Activated CD4-positive, alpha-beta T cell treated with anti-CD3 and anti-CD28 coated beads, Interleukin-2, amount 10 ng/mL, durations not matched to agents 24 days and 14 days (primary cell): ENCODE measurements at regions of chr1 and their contacts with region 1.

Region 1: DNA sequence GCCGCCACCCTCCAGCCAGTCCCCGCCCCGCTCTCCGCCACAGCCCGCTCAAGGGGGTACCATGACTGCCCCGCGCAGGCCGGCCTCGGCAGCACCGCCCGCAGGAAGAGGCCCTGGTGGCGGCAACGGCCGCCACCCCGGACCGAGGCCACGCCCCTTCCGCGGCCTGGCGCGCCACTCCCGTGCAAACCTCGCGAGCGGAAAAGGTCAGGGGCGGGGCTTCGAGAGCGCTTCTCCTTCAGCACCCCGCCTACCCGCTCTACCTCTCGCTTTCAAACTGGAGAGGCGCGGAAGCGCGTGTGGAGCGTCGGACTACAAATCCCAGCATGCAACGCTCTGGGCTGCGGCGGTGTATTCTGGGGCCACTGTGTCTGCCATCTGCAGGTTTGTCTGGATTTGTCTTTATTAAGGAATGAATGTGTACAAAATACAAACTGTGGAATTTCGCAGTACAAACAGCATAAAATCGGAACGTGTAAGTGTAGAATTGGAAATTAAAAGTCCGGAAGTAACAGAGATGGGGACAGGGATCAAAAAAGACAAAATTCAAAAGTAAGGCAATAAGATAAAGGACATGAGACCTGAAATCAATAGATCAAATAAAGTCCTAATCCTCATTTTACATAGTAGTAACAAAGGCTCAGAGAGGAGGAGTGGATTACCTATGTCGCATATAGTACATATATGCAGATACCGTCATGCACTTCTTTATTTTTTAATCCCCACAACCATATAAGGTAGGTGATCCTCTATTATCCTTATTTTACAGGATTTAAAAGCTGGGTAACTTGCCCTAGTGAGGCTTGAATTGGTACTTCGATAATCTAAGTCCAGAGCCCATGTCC is 464 bp upstream of the ADSS2 start:
- DNase-seq: peak; percentile 100
- H3K4me3 Mint-ChIP-seq: peak overlapping the region; percentile 92
- H3K27ac Mint-ChIP-seq: peak overlapping the region; percentile 96
- H3K4me1 Mint-ChIP-seq: peaks cover 29% of the 10 kb centered on the region
- H3K27me3 Mint-ChIP-seq: no peaks in the 10 kb centered on the region

Region 2: DNA sequence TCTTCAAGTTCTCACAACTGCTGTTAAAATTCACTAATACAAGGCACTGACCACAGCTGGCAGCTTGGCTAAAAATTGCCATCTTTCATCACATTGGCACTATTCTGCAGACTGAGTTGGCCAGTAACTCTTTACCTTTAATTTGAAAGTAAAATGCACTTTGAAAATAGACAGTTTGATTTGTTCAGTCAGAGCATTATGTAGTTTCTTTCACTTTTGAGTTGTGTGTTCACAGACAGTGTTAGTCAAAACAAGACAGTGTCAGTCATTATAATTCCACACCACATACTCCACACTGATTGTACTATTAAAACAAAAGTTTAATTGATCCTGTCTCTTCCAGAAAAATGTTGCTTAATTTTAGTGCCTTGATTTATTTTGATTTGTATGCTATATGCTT is 1035.7 kb before region 1 on chr1:
- intact Hi-C with region 1: loop called (anchors 1 kb)
- DNase-seq: no peak
- H3K4me3 Mint-ChIP-seq: peak overlapping the region; percentile 68
- H3K27ac Mint-ChIP-seq: peak overlapping the region; percentile 72
- H3K4me1 Mint-ChIP-seq: peaks cover 51% of the 10 kb centered on the region
- H3K27me3 Mint-ChIP-seq: no peaks in the 10 kb centered on the region

Region 3: DNA sequence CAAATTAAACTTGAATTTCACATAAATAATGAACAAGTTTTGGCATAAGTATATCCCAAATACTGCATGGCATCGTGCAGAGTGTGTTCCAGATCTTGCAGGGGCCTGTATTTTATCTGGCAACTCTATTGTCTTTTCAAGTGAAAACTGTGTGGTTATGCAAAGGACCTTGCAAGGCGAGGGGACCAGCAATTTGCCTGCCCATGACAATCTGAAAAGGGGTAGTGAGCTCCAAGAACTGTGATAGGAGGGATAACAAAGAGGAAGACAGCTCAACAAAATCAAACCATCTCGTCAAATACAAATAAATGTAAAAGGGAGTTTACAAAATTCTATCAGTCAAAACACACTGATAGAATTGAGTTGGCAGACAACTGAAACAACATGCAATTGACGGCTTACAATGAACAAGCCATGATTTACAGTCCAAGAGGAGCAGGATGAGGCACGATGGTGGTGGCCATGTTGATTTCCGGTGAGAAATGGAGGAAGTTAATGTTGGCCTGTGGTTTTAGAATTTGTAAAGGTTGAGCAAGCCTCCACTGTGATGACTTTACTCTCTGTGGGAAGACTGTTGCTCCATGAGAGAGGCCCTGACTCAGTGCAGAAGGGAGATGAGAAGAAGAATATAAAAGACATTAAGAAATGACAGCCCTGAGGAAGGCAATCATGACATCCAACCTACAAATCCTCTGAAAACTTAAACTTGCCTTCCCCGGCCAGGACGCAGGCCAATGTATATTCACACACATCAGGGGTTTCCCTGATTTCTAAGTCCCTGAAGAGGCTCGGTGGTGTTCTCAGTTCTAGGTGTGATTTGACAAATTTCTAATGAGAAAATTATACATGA is 132.7 kb before region 1 on chr1:
- intact Hi-C with region 1: loop called (anchors 1 kb)
- DNase-seq: peak; percentile 85
- H3K4me3 Mint-ChIP-seq: peak overlapping the region; percentile 60
- H3K27ac Mint-ChIP-seq: peak overlapping the region; percentile 84
- H3K4me1 Mint-ChIP-seq: peaks cover 43% of the 10 kb centered on the region
- H3K27me3 Mint-ChIP-seq: no peaks in the 10 kb centered on the region

Region 4: GRCh38 chr1:244435562-244436205 is 16.5 kb before region 1 on chr1:
- intact Hi-C with region 1: loop called (anchors 1 kb)
- DNase-seq: peak; percentile 59
- H3K4me3 Mint-ChIP-seq: peak overlapping the region; percentile 63
- H3K27ac Mint-ChIP-seq: peak overlapping the region; percentile 99
- H3K4me1 Mint-ChIP-seq: peaks cover 36% of the 10 kb centered on the region
- H3K27me3 Mint-ChIP-seq: no peaks in the 10 kb centered on the region

Region 5: GRCh38 chr1:244713332-244713731 is 261.2 kb after region 1 on chr1:
- intact Hi-C with region 1: no loop called
- DNase-seq: no peak
- H3K4me3 Mint-ChIP-seq: no peak overlapping the region
- H3K27ac Mint-ChIP-seq: no peak overlapping the region
- H3K4me1 Mint-ChIP-seq: peaks cover 8% of the 10 kb centered on the region
- H3K27me3 Mint-ChIP-seq: peaks cover 3% of the 10 kb centered on the region

Region 6: DNA sequence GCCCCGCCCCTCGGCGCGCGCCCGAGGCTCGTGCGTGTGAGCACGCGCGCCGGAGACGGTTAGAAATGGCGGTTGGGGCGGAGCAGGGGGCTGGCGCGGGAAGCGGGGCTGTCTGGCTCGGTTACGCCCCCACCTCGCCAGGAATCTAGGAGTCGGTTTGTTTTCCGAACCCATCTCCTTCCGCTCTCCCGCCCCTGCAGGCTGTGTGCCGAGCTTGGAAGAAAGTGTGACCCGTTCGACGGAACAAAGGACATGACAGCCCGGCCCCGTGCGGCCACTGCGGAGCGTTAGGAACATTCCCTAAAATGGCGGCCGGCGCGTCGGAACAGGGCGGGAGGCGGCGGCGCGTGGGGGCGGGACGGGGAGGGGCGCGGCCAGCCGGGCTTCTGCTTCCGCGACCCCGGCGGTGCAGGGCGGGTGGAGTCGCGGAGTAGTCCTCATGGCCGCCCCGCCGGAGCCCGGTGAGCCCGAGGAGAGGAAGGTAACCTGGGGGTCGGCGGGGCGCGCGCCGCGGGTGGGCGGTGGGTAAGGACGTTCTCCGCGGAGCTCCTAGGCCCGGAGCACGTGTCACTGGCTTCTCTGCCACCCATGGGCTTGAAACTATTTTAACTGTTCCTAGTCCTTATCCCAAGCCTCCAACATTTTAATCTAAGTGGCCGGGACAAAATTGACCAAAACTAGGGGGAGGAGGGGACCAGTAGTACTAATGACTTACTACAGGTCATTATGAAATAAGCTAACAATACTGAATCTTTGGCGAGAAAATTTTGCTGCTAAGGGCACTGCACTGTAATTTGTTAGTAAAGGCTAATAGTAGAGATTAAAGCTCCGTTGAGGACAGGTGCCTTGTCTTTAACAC is 383.3 kb after region 1 on chr1 and contains the start of gene COX20:
- intact Hi-C with region 1: loop called (anchors 1 kb)
- DNase-seq: peak; percentile 97
- H3K4me3 Mint-ChIP-seq: peak within 1 kb of the TSS; percentile 91
- H3K27ac Mint-ChIP-seq: peak within 1 kb of the TSS; percentile 99
- H3K4me1 Mint-ChIP-seq: peaks cover 43% of the 10 kb centered on the region
- H3K27me3 Mint-ChIP-seq: no peaks in the 10 kb centered on the region
- total RNA-seq, gene COX20: 28.6 and 30.0 TPM in 2 replicates

Region 7: DNA sequence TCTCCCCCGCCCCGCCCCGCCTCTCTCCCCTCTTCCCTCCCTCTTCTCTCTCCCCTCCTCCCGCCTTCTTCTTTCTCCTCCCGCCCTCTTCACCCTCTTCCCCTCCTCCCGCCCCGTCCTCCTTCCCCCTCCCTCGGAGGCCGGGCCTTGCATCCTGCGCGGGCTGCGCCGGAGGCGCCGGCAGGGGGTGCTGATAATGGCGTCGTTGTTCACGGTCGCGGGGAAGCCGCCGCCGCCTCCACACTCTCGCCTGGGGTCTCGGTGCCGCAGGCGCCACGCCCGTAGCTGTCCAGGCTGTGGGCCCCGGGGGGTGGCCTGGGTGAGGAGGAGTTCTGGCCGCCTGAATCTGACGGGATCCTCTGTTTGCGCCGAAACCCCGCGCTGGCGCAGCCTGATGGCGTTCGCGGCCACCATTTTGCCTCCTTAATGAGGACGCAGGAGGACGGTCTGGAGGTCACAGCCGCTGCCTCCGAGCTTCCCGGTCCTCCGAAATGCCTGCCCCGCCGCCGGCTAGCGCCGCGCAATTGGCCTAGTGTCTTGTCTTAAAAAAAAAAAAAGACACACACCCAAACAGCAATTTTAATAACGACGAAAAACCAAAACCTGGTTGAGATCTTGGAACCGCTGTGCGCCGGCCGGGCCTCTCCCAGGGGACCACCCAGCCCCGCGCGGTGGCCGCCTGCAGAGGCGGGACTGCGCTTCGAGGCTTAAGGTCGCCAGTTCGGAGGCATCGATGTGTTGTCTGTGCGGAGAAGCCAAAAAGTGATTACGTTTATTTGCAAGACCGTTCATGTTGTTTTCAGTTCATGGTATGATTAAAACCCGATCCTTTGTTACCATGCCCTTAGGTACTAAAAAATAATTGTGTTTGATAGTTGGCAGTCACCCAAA is 518.7 kb after region 1 on chr1:
- intact Hi-C with region 1: loop called (anchors 1 kb)
- DNase-seq: peak; percentile 97
- H3K4me3 Mint-ChIP-seq: peak overlapping the region; percentile 94
- H3K27ac Mint-ChIP-seq: peak overlapping the region; percentile 99
- H3K4me1 Mint-ChIP-seq: peaks cover 17% of the 10 kb centered on the region
- H3K27me3 Mint-ChIP-seq: peaks cover 3% of the 10 kb centered on the region